ENCODE measurements at regions of chr14 and their contacts with region 1.

Region 1: GRCh38 chr14:103391048-103391447 is 5.8 kb downstream of the MARK3 start:
- DNase-seq: no peak
- ATAC-seq: peak in 2 of 8 donors; percentile 15 to 17
- H3K4me3 ChIP-seq: no peak overlapping the region
- H3K27ac ChIP-seq: peak overlapping the region in 2 of 10 donors; percentile 3 to 6
- H3K4me1 ChIP-seq: peaks cover 7 to 92% (median 83%) of the 10 kb centered on the region in 9 donors
- H3K27me3 ChIP-seq: no peaks in the 10 kb centered on the region
- CTCF ChIP-seq: peak in 8 of 9 donors; percentile 33 to 71 (median 62)

Region 2: GRCh38 chr14:102192664-102193502 is 1198.2 kb before region 1 on chr14:
- intact Hi-C with region 1: no loop called
- DNase-seq: no peak
- ATAC-seq: no peak
- H3K4me3 ChIP-seq: no peak overlapping the region
- H3K27ac ChIP-seq: no peak overlapping the region
- H3K4me1 ChIP-seq: peaks cover 0 to 46% (median 27%) of the 10 kb centered on the region in 9 donors
- H3K27me3 ChIP-seq: no peaks in the 10 kb centered on the region
- CTCF ChIP-seq: no peak

Region 3: GRCh38 chr14:103333754-103334643 is 57.0 kb before region 1 on chr14 and contains the start of gene EIF5:
- intact Hi-C with region 1: loop called in 5 of 10 experiments (anchors 5 to 10 kb)
- DNase-seq: peak; percentile 98 to 100
- ATAC-seq: peak; percentile 95 to 99 (median 97)
- H3K4me3 ChIP-seq: peak within 1 kb of the TSS; percentile 70 to 98 (median 92)
- H3K27ac ChIP-seq: peak within 1 kb of the TSS; percentile 97 to 100 (median 100)
- H3K4me1 ChIP-seq: peaks cover 7 to 46% (median 33%) of the 10 kb centered on the region in 9 donors
- H3K27me3 ChIP-seq: no peaks in the 10 kb centered on the region
- CTCF ChIP-seq: peak in 4 of 9 donors; percentile 20 to 39 (median 24)
- total RNA-seq, gene EIF5: 163 to 323 (median 243) TPM

Region 4: GRCh38 chr14:103427485-103428443 is 36.7 kb after region 1 on chr14:
- intact Hi-C with region 1: loop called in 3 of 10 experiments (anchors 5 kb)
- DNase-seq: peak in 1 of 2 donors; percentile 40
- ATAC-seq: peak in 6 of 8 donors; percentile 26 to 70 (median 61)
- H3K4me3 ChIP-seq: no peak overlapping the region
- H3K27ac ChIP-seq: peak overlapping the region in 8 of 10 donors; percentile 1 to 82 (median 35)
- H3K4me1 ChIP-seq: peaks cover 0 to 63% (median 37%) of the 10 kb centered on the region in 9 donors
- H3K27me3 ChIP-seq: no peaks in the 10 kb centered on the region
- CTCF ChIP-seq: no peak

Region 5: DNA sequence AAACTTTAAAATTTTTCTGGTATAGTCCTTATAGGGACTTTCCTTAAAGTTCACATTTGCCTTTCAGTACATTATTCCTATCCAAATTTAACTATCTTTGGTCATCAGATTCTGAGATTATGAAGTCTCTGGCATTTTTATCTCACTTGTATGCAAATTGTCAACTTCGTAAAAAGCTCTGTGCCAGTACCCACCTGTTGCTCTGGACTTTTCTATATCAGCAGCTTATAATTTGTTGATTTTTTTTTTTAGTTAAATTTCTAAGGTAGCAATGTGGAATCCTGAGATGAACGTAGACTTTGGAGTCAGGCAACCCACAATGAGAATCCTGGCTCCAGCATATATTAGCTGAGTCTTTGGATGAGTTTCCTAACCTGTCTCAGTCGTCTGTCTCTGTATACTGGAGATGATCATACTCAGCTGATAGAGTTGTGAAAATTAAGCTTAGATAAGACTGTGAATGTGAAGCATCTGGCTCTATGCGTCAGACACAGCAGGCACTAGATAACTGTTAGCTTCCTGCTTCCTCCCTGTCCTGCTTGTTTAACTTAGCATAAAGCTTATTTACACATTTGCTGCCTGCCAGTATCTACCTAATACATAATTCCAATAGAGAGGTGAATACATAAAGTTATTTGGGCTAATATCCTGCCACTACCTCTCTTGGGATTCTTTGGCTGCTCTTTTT is 53.9 kb after region 1 on chr14:
- intact Hi-C with region 1: loop called in 4 of 10 experiments (anchors 5 to 10 kb)
- DNase-seq: no peak
- ATAC-seq: peak in 4 of 8 donors; percentile 47 to 84 (median 70)
- H3K4me3 ChIP-seq: no peak overlapping the region
- H3K27ac ChIP-seq: peak overlapping the region in 6 of 10 donors; percentile 5 to 52 (median 24)
- H3K4me1 ChIP-seq: peaks cover 7 to 67% (median 53%) of the 10 kb centered on the region in 9 donors
- H3K27me3 ChIP-seq: no peaks in the 10 kb centered on the region
- CTCF ChIP-seq: no peak

Region 6: GRCh38 chr14:103456167-103456835 is 65.3 kb after region 1 on chr14:
- intact Hi-C with region 1: loop called in 1 of 10 experiments (anchors 10 kb)
- DNase-seq: no peak
- ATAC-seq: no peak
- H3K4me3 ChIP-seq: no peak overlapping the region
- H3K27ac ChIP-seq: no peak overlapping the region
- H3K4me1 ChIP-seq: peaks cover 0 to 15% (median 7%) of the 10 kb centered on the region in 9 donors
- H3K27me3 ChIP-seq: no peaks in the 10 kb centered on the region
- CTCF ChIP-seq: no peak